ENCODE measurements at regions of chr2 and their contacts with region 1.

Region 1: GRCh38 chr2:191299010-191299409 is 53.8 kb downstream of the MYO1B start:
- DNase-seq: no peak
- ATAC-seq: no peak
- H3K4me3 ChIP-seq: no peak overlapping the region
- H3K27ac ChIP-seq: no peak overlapping the region
- H3K4me1 ChIP-seq: peaks cover 2% of the 10 kb centered on the region in 2 experiments; a peak in 2 of 4 replicates
- H3K27me3 ChIP-seq: no peaks in the 10 kb centered on the region
- CTCF ChIP-seq: peak in 1 of 3 experiments; percentile 26; a peak in 1 of 6 replicates
- POLR2A ChIP-seq: no peak
- RAD21 ChIP-seq: peak; percentile 45

Region 2: DNA sequence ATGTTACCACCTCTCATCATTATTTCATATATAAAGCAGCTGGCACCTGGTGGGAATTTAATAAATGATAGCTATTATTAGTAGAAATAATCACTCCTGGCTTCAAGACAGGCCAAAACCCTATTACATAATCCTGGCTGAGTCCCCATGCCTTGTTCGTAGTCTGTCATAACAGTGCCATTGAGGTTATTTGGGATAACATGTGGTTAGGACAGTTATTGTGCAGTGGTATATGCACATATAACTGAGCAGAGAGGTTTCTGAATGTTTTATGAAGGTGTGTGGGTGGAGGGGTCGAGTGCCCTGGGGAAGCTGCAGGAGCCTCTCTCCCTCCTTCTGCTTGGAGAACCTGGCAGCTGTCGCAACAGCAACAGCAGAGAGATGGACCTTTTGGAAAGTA is 216.5 kb after region 1 on chr2:
- CTCF ChIA-PET with region 1: no interaction called
- POLR2A ChIA-PET with region 1: no interaction called
- RAD21 ChIA-PET with region 1: no interaction called
- intact Hi-C with region 1: loop called (anchors 5 kb)
- DNase-seq: no peak
- ATAC-seq: no peak
- H3K4me3 ChIP-seq: no peak overlapping the region
- H3K27ac ChIP-seq: no peak overlapping the region
- H3K4me1 ChIP-seq: no peaks in the 10 kb centered on the region
- H3K27me3 ChIP-seq: no peaks in the 10 kb centered on the region
- CTCF ChIP-seq: no peak
- POLR2A ChIP-seq: no peak
- RAD21 ChIP-seq: no peak

Measured in HCT116 (cell line).